CD4-positive, alpha-beta memory T cell (primary cell): ENCODE measurements at regions of chr12 and their contacts with region 1.

Region 1: GRCh38 chr12:49655595-49656236 is 32.4 kb downstream of the PRPF40B start:
- DNase-seq: no peak
- H3K4me3 ChIP-seq: no peak overlapping the region
- H3K4me3 Mint-ChIP-seq: peak overlapping the region in 2 of 8 donors; percentile 4 to 39
- H3K27ac ChIP-seq: no peak overlapping the region
- H3K27ac Mint-ChIP-seq: peak overlapping the region in 5 of 7 donors; percentile 24 to 86 (median 66)
- H3K4me1 ChIP-seq: peaks cover 15% of the 10 kb centered on the region
- H3K4me1 Mint-ChIP-seq: peaks cover 13 to 34% (median 27%) of the 10 kb centered on the region in 4 donors
- H3K27me3 ChIP-seq: no peaks in the 10 kb centered on the region
- H3K27me3 Mint-ChIP-seq: no peaks in the 10 kb centered on the region

Region 2: GRCh38 chr12:49636979-49637755 is 18.5 kb before region 1 on chr12:
- CTCF ChIA-PET with region 1: interaction called, 13 read pairs
- POLR2A ChIA-PET with region 1: interaction called, 3 read pairs
- intact Hi-C with region 1: no loop called
- DNase-seq: peak; percentile 53 to 71 (median 59)
- H3K4me3 ChIP-seq: no peak overlapping the region
- H3K4me3 Mint-ChIP-seq: no peak overlapping the region
- H3K27ac ChIP-seq: no peak overlapping the region
- H3K27ac Mint-ChIP-seq: peak overlapping the region in 5 of 7 donors; percentile 2 to 81 (median 30)
- H3K4me1 ChIP-seq: peaks cover 8% of the 10 kb centered on the region
- H3K4me1 Mint-ChIP-seq: peaks cover 9 to 13% (median 11%) of the 10 kb centered on the region in 4 donors
- H3K27me3 ChIP-seq: no peaks in the 10 kb centered on the region
- H3K27me3 Mint-ChIP-seq: no peaks in the 10 kb centered on the region

Region 3: DNA sequence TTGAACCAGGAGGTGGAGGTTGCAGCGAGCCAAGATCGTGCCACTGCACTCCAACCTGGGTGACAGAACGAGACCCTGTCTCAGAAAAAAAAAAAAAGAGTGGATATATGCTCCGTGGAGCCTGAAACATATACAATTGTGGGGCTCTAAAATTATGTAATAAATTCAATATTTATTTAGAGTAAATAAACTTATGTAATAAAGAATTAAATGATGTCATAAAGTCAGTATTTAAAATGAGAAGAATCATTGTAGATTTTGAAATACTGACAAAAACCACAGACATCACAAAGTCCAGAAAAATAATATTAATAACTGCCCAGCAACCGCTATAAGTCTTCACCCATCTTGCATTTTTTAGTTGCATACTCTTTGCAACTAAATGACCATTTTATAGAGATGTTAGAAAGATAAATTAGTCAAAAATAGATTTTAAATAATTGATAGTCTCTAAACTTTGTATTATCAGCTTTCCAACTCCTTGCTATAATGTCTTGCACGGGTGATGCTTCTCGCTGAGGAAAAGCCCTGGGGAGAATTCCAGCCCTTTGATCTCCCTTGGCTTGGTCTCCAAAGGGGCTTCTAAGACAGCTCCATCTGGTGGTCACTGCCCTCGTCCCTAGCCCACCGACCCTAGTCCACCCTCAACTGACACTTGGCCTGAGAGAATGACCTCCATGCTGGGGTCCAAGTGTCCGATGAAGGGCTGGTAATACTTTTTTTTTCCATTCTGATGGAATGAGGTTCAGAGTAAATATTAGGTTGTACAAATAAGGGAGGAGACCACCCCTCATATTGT is 77.7 kb after region 1 on chr12:
- CTCF ChIA-PET with region 1: no interaction called
- POLR2A ChIA-PET with region 1: no interaction called
- intact Hi-C with region 1: no loop called
- DNase-seq: no peak
- H3K4me3 ChIP-seq: no peak overlapping the region
- H3K4me3 Mint-ChIP-seq: no peak overlapping the region
- H3K27ac ChIP-seq: no peak overlapping the region
- H3K27ac Mint-ChIP-seq: no peak overlapping the region
- H3K4me1 ChIP-seq: no peaks in the 10 kb centered on the region
- H3K4me1 Mint-ChIP-seq: no peaks in the 10 kb centered on the region
- H3K27me3 ChIP-seq: no peaks in the 10 kb centered on the region
- H3K27me3 Mint-ChIP-seq: peaks cover 0 to 3% of the 10 kb centered on the region in 2 donors